Left lung (tissue), 14 donors: ENCODE measurements at regions of chr5 and their contacts with region 1.

Region 1: GRCh38 chr5:179166886-179167841 is 107.0 kb downstream of the ZNF354C start:
- DNase-seq: peak; percentile 39 to 88 (median 62)
- ATAC-seq: peak; percentile 88
- H3K4me3 ChIP-seq: peak overlapping the region in 1 of 2 donors; percentile 18
- H3K27ac ChIP-seq: no peak overlapping the region
- H3K4me1 ChIP-seq: peaks cover 6 to 11% of the 10 kb centered on the region in 2 donors
- H3K27me3 ChIP-seq: peaks cover 0 to 27% of the 10 kb centered on the region in 2 donors
- CTCF ChIP-seq: peak; percentile 91 to 97

Region 2: DNA sequence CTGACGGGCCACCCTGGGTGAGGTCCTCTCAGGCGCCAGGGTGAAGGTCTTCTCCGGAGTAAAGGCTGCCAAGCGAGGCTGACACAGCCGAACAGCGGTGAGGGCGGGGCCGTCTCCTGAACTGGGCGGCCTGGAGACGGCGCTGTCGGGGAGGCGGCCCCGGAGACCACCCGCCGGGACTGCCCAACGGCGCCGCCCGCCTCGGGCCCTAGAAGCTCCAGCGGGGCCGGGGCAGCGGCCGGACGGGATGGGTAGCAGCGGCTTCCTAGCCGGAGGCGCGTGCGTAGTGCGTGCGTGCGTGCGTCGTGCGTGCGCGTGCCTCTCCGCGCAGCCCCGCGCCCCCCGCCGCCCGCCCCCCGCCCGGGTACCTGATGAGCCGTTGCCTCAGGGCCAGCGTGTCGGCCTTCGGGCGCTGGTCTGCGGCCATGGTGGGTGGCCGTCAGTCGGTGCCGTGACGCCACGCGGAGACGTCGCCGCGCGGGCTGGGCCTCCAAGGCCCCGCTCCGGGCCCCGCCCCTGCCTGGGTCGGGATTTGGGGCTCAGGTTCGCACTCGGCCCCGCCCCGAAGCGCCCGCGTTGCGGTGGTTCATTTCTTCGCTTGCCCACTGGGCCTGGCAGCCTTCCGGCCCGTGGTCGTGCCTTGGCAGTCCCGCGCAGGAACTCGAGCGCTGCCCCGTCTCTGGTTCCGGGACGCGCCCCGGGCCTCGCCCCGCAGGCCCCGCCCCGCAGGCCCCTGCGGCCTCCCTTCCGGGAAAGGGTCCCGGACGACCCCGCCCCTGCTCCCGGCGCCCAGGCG is 934.8 kb before region 1 on chr5 and contains the start of gene PHYKPL:
- intact Hi-C with region 1: no loop called
- DNase-seq: peak; percentile 67 to 95 (median 72)
- ATAC-seq: peak; percentile 79
- H3K4me3 ChIP-seq: peak within 1 kb of the TSS; percentile 64 to 91
- H3K27ac ChIP-seq: peak within 1 kb of the TSS; percentile 99
- H3K4me1 ChIP-seq: peaks cover 33 to 88% of the 10 kb centered on the region in 2 donors
- H3K27me3 ChIP-seq: no peaks in the 10 kb centered on the region
- CTCF ChIP-seq: no peak
- polyA plus RNA-seq, gene PHYKPL: 108 to 155 (median 142) TPM

Region 3: GRCh38 chr5:178965465-178966055 is 201.6 kb before region 1 on chr5:
- intact Hi-C with region 1: no loop called
- DNase-seq: no peak
- ATAC-seq: no peak
- H3K4me3 ChIP-seq: no peak overlapping the region
- H3K27ac ChIP-seq: no peak overlapping the region
- H3K4me1 ChIP-seq: no peaks in the 10 kb centered on the region
- H3K27me3 ChIP-seq: no peaks in the 10 kb centered on the region
- CTCF ChIP-seq: no peak

Region 4: DNA sequence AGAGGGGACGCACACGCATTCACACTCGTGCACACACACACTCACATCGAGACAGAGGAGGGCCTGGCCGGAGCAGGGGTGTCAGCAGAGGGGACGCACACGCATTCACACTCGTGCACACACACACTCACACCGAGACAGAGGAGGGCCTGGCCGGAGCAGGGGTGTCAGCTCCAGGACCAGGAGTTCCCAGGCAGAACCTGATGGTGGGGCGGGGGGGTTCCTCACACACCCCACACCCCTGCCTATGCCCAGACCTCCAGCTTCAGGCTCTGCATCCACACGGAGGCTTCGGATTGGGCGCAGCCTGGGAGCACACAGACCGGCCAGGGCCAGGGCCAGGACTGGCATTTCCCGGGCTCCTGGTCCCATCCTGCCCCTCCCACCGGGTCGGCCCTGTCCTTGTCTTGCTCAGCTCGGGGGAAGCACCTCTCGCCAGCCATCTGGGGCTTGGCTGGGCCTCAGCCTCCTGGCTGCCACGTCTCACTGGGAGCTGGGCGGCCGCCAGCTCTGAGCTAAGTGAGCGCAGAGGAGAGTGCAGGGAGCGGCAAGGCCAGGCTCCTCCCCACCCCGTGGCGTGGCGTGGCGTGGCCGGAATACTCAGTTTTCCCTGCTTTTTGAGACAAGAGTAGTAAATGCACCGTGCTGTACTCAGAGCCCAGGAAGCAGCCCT is 146.8 kb after region 1 on chr5:
- intact Hi-C with region 1: no loop called
- DNase-seq: peak; percentile 76 to 94 (median 82)
- ATAC-seq: peak; percentile 77
- H3K4me3 ChIP-seq: no peak overlapping the region
- H3K27ac ChIP-seq: peak overlapping the region; percentile 16 to 62
- H3K4me1 ChIP-seq: peaks cover 0 to 5% of the 10 kb centered on the region in 2 donors
- H3K27me3 ChIP-seq: peaks cover 0 to 28% of the 10 kb centered on the region in 2 donors
- CTCF ChIP-seq: no peak

Region 5: GRCh38 chr5:179336126-179336870 is 169.1 kb after region 1 on chr5:
- intact Hi-C with region 1: loop called in 1 of 2 experiments (anchors 10 kb)
- DNase-seq: peak in 1 of 4 donors; percentile 70
- ATAC-seq: no peak
- H3K4me3 ChIP-seq: no peak overlapping the region
- H3K27ac ChIP-seq: no peak overlapping the region
- H3K4me1 ChIP-seq: no peaks in the 10 kb centered on the region
- H3K27me3 ChIP-seq: peaks cover 0 to 57% of the 10 kb centered on the region in 2 donors
- CTCF ChIP-seq: no peak

Region 6: DNA sequence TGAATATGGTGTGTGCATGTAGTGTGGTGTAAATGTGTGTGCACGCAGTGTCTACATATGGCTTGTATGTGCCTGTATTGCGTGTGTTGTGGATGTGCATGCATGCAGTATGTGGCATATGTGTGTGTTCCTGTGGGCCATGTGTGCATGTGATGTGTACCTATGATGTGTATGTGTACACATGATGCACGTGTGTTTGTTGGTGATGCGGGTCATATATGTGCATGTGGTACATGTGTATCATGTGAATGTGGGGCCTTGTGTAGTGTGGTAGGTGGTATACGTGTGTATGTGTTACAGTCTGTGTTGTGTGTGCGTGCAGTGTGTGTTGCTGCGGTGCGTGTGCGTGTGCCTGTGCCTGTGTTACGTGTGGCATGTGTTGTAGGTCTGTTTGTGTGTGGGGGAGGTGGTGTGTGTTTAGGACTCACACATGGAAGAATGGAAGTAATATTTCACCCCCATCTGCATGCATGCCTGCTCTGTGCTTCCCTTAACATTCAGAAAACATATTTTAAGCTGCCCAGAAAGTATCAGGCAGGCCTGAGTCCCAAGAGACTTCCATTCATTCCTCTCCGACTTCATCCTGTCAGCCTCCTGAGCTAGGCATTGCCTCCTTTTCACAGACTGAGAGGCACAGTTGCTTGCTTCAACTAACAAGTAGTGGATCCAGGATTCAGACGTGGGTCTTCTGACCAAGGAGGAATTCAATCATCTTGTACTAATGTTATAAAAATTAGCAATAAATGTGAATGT is 327.8 kb after region 1 on chr5:
- intact Hi-C with region 1: loop called in 1 of 2 experiments (anchors 5 kb)
- DNase-seq: no peak
- ATAC-seq: no peak
- H3K4me3 ChIP-seq: no peak overlapping the region
- H3K27ac ChIP-seq: no peak overlapping the region
- H3K4me1 ChIP-seq: no peaks in the 10 kb centered on the region
- H3K27me3 ChIP-seq: peaks cover 0 to 11% of the 10 kb centered on the region in 2 donors
- CTCF ChIP-seq: no peak